Aorta (tissue), 5 donors: ENCODE measurements at regions of chr4 and their contacts with region 1.

Region 1: GRCh38 chr4:72375073-72375736 is 193.8 kb downstream of the ADAMTS3 start:
- DNase-seq: no peak
- ATAC-seq: no peak
- H3K4me3 ChIP-seq: no peak overlapping the region
- H3K27ac ChIP-seq: no peak overlapping the region
- H3K4me1 ChIP-seq: peaks cover 3 to 4% of the 10 kb centered on the region in 2 donors
- H3K27me3 ChIP-seq: no peaks in the 10 kb centered on the region

Region 2: GRCh38 chr4:72340803-72341431 is 34.3 kb before region 1 on chr4:
- intact Hi-C with region 1: loop called in 1 of 2 experiments (anchors 5 kb)
- DNase-seq: no peak
- ATAC-seq: no peak
- H3K4me3 ChIP-seq: no peak overlapping the region
- H3K27ac ChIP-seq: peak overlapping the region in 1 of 2 donors; percentile 76
- H3K4me1 ChIP-seq: peaks cover 0 to 7% of the 10 kb centered on the region in 2 donors
- H3K27me3 ChIP-seq: no peaks in the 10 kb centered on the region